Activated T-helper 1 cell treated with anti-CD3 and anti-CD28 coated beads, Interleukin-12 subunit alpha, Interleukin-12 subunit beta, Interleukin-2, Interleukin-4 antibody, amounts not matched to agents 30 ng/mL and 10 ng/mL and 1 ng/mL, durations not matched to agents 14 hours and 24 hours and 36 hours (primary cell): ENCODE measurements at regions of chr11 and their contacts with region 1.

Region 1: GRCh38 chr11:798093-798713 is at the start of gene SLC25A22:
- DNase-seq: peak; percentile 84
- H3K4me3 Mint-ChIP-seq: peak within 1 kb of the TSS; percentile 93
- H3K27ac Mint-ChIP-seq: peak within 1 kb of the TSS; percentile 82
- H3K4me1 Mint-ChIP-seq: peaks cover 4% of the 10 kb centered on the region
- H3K27me3 Mint-ChIP-seq: no peaks in the 10 kb centered on the region
- total RNA-seq, gene SLC25A22: 87.6 and 92.0 TPM in 2 replicates

Region 2: DNA sequence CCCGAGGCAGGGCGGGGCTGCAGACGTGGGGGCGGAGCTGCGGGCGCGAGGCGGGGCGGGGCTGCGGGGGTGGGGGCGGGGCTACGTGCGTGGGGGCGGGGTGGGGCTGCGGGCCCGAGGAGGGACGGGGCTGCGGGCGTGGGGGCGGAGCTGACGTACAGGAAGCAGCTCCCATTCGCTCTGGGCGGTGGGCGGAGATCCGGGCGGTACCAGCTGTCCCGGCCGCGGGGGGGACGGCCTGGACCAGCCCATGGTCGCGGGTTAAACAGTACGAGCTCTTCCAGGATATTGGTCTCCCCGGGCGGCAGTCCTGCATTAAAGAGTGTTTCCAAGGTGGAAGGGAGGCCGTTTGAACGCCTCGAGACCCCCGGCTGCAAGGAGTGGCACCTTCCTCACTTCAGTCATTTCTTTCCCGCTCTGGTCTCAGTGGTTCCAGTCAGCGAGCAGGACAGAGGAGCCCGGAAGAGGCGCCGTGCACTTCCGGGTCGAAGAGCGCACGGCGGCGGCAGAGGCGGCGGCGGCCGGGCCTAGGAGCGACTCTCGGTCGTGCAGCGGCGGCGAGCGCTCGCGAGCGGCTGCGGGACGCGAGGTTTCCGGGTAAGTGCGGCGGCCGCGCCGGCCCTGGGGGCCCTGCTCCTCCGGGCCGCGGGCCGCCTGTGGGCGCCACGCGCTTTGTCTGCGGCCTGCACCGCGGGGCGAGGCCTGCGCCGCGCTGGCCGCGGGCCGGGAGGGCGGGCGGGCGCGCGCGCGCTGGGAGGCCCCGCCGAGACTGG is 222.0 kb before region 1 on chr11 and contains the start of gene PHRF1:
- intact Hi-C with region 1: loop called (anchors 1 kb)
- DNase-seq: peak; percentile 91
- H3K4me3 Mint-ChIP-seq: peak within 1 kb of the TSS; percentile 94
- H3K27ac Mint-ChIP-seq: peak within 1 kb of the TSS; percentile 100
- H3K4me1 Mint-ChIP-seq: peaks cover 41% of the 10 kb centered on the region
- H3K27me3 Mint-ChIP-seq: peaks cover 15% of the 10 kb centered on the region
- total RNA-seq, gene PHRF1: 58.6 and 59.8 TPM in 2 replicates

Region 3: DNA sequence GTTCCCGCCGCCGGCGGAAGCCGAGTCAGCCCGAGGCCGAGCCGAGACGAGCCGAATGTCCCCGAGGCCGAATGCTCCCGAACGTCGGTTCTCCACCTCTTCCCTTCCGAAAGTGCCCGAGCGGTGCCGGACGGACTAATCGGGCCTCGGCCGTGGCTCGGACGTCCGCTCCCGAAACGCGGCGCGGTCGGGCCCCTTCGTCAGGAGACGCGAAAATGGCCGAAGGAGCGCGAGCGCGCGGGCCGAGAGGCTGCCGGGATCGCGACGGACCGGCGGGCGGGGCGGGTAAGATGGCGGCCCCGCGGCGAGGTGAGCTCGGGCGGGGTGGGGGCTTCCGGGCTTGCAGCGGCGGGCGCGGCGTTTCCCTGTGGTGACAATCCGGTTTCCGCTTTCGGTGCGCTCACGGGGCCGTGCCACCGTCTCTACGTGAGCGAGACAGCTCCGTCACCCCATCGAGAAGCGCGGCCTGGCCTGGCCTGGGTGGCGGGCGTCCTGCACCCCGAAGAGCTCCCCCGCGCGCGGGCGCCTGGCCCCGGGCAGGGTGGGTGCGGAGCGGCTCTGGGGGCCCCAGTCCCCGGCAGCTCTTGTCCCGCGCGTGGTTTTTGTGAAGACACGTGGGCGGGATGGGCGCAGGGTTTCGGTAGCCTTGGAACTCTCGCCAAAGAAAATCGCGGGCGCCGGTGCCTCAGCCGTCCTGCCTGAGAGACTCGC is 102.5 kb before region 1 on chr11 and contains the start of gene TMEM80:
- intact Hi-C with region 1: loop called (anchors 5 kb)
- DNase-seq: peak; percentile 98
- H3K4me3 Mint-ChIP-seq: peak within 1 kb of the TSS; percentile 88
- H3K27ac Mint-ChIP-seq: peak within 1 kb of the TSS; percentile 93
- H3K4me1 Mint-ChIP-seq: peaks cover 49% of the 10 kb centered on the region
- H3K27me3 Mint-ChIP-seq: peaks cover 2% of the 10 kb centered on the region
- total RNA-seq, gene TMEM80: 14.2 and 14.7 TPM in 2 replicates

Region 4: GRCh38 chr11:777288-778255 is 20.6 kb before region 1 on chr11 and contains the start of gene GATD1:
- intact Hi-C with region 1: loop called (anchors 1 kb)
- DNase-seq: peak; percentile 94
- H3K4me3 Mint-ChIP-seq: peak within 1 kb of the TSS; percentile 84
- H3K27ac Mint-ChIP-seq: peak within 1 kb of the TSS; percentile 53
- H3K4me1 Mint-ChIP-seq: peaks cover 14% of the 10 kb centered on the region
- H3K27me3 Mint-ChIP-seq: no peaks in the 10 kb centered on the region
- total RNA-seq, gene GATD1: 70.4 and 81.7 TPM in 2 replicates

Region 5: GRCh38 chr11:819129-819931 is 21.1 kb after region 1 on chr11:
- intact Hi-C with region 1: loop called (anchors 1 kb)
- DNase-seq: peak; percentile 86
- H3K4me3 Mint-ChIP-seq: peak overlapping the region; percentile 87
- H3K27ac Mint-ChIP-seq: no peak overlapping the region
- H3K4me1 Mint-ChIP-seq: no peaks in the 10 kb centered on the region
- H3K27me3 Mint-ChIP-seq: no peaks in the 10 kb centered on the region

Region 6: DNA sequence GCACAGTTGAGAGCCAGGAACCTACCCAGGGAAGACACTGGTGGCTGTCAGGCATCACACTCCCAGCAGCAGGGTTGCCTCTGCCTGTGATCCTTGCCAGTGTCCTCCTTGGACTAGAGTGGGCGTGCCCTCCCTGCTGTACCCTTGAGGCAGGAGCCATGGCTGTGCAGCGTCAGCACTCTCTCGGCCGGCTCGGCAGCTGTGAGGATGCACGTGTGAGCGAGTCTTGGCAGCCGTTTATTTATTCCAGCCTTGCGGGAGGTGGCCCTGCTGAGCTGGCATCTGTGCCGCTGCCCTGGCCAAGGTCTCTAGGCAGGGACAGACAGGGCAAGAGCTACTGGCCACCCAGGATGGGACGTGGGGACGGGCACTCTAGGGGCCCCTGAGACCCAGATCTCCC is 78.3 kb after region 1 on chr11:
- intact Hi-C with region 1: no loop called
- DNase-seq: no peak
- H3K4me3 Mint-ChIP-seq: no peak overlapping the region
- H3K27ac Mint-ChIP-seq: no peak overlapping the region
- H3K4me1 Mint-ChIP-seq: no peaks in the 10 kb centered on the region
- H3K27me3 Mint-ChIP-seq: no peaks in the 10 kb centered on the region